ENCODE measurements at regions of chr1 and their contacts with region 1.

Region 1: GRCh38 chr1:230104395-230105244 is 37.6 kb downstream of the GALNT2 start:
- DNase-seq: peak; percentile 96
- H3K4me3 ChIP-seq: peak overlapping the region in 1 of 3 experiments; percentile 3
- H3K27ac ChIP-seq: peak overlapping the region; percentile 76
- H3K4me1 ChIP-seq: peaks cover 25% of the 10 kb centered on the region
- H3K27me3 ChIP-seq: no peaks in the 10 kb centered on the region
- CTCF ChIP-seq: peak in 1 of 2 donors; percentile 18
- POLR2A ChIP-seq: peak; percentile 19

Region 2: DNA sequence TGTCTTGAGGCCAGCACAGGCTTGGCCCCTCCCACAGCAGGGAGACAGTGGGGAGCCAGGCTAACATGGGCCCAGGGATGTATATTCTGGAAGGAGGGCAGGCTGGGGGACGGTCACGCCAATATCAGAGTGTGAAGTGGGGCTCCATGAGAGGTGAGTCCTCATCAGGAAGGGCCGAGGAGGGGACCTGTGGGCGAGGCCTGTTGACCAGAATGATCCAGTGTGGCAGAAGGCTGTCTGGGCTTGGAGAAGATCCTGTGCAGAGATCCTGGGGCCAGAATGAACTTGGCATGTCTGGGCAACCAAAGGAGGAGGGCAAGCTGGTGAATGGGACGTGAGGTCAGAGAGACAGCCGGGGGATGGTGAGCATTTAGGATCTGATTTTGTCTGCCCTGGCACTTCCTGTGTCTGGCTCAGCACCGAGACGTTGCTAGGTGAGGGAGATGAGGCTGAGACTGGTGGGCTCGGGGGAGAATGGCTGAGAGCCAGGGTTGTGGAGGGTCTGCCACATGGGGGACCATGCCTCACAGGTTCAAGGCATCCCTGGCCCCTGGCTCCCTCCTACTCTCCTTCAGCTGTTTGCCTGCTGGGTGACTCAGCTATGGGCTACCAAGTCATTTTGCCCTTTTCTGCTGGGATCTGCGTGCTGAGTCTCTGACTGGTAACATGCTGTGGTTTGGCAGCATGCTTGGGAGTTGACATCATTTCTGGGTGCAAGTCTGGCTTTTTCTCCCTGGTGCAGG is 20.3 kb before region 1 on chr1:
- CTCF ChIA-PET with region 1: interaction called, 11 read pairs
- POLR2A ChIA-PET with region 1: interaction called, 3 read pairs
- dilution Hi-C with region 1: no loop called
- intact Hi-C with region 1: loop called (anchors 1 kb)
- DNase-seq: peak; percentile 75
- H3K4me3 ChIP-seq: no peak overlapping the region
- H3K27ac ChIP-seq: peak overlapping the region; percentile 75
- H3K4me1 ChIP-seq: peaks cover 20% of the 10 kb centered on the region
- H3K27me3 ChIP-seq: no peaks in the 10 kb centered on the region
- CTCF ChIP-seq: no peak
- POLR2A ChIP-seq: no peak

Region 3: GRCh38 chr1:230140221-230141020 is 35.8 kb after region 1 on chr1:
- CTCF ChIA-PET with region 1: interaction called, 3 read pairs
- POLR2A ChIA-PET with region 1: no interaction called
- dilution Hi-C with region 1: no loop called
- intact Hi-C with region 1: loop called (anchors 5 kb)
- DNase-seq: no peak
- H3K4me3 ChIP-seq: no peak overlapping the region
- H3K27ac ChIP-seq: no peak overlapping the region
- H3K4me1 ChIP-seq: no peaks in the 10 kb centered on the region
- H3K27me3 ChIP-seq: no peaks in the 10 kb centered on the region
- CTCF ChIP-seq: no peak
- POLR2A ChIP-seq: no peak

Region 4: DNA sequence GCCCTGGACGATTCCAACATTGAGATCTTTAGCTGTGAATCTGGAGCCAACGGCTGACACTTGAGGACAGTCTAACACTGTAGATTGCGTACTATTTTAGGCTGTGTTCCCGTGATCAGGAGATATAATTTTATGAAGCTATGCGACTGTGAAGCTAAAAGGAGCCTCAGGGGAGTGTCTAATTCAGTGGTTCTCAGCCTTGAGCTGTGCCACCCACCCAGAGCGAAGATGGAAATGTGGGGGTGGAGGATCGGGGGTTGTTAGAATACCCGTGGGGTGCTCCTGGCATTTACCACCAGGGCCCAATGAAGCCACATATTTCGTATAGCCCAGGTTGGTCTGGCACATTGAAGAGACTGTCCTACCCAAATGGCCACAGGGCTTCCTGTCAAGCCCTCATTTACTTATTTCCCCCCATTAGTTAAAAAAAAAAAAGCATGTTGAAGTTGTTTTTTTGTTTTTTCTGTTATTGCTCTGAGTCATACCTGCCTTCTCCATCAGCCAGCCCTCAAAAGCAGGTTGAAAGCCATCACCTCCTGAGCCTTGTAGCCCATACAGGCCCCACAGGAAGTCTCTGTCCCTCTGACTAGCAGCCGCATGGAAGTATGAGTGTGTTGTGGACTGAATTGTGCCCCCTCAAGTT is 104.1 kb after region 1 on chr1:
- CTCF ChIA-PET with region 1: interaction called, 6 read pairs
- POLR2A ChIA-PET with region 1: no interaction called
- dilution Hi-C with region 1: no loop called
- intact Hi-C with region 1: loop called (anchors 2 kb)
- DNase-seq: no peak
- H3K4me3 ChIP-seq: no peak overlapping the region
- H3K27ac ChIP-seq: peak overlapping the region; percentile 83
- H3K4me1 ChIP-seq: peaks cover 38% of the 10 kb centered on the region
- H3K27me3 ChIP-seq: no peaks in the 10 kb centered on the region
- CTCF ChIP-seq: no peak
- POLR2A ChIP-seq: no peak